Head of caudate nucleus (tissue), 42 donors: ENCODE measurements at regions of chr5 and their contacts with region 1.

Region 1: GRCh38 chr5:4976902-4977301 is 163.2 kb upstream of the ADAMTS16 start:
- DNase-seq: no peak

Region 2: DNA sequence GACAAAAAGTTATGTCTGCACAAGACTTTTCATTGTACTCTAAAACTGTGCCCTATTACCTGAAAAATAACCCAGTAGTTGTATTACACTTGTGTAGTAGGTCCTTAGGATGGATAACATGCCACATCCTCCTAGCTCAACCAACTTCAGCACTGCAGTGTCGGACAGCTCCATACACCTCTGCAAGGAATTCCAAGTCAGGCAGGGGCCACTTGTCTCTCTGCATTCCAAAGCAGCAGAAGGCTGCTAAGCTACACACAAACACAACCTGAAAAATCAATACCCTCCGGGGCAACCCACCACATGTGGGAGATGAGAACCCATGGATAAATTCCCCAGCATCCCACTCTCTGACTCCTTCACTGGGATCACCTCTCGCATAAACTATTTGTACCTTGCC is 1351.3 kb after region 1 on chr5:
- intact Hi-C with region 1: loop called (anchors 10 kb)
- DNase-seq: no peak